Right ventricle myocardium inferior (tissue), 1 donor: ENCODE measurements at regions of chr10 and their contacts with region 1.

Region 1: GRCh38 chr10:80924063-80924952 is 386.6 kb downstream of the SH2D4B start:
- DNase-seq: no peak
- ATAC-seq: no peak

Region 2: GRCh38 chr10:80382989-80383388 is 541.3 kb before region 1 on chr10:
- intact Hi-C with region 1: loop called (anchors 5 kb)
- DNase-seq: no peak
- ATAC-seq: no peak

Region 3: DNA sequence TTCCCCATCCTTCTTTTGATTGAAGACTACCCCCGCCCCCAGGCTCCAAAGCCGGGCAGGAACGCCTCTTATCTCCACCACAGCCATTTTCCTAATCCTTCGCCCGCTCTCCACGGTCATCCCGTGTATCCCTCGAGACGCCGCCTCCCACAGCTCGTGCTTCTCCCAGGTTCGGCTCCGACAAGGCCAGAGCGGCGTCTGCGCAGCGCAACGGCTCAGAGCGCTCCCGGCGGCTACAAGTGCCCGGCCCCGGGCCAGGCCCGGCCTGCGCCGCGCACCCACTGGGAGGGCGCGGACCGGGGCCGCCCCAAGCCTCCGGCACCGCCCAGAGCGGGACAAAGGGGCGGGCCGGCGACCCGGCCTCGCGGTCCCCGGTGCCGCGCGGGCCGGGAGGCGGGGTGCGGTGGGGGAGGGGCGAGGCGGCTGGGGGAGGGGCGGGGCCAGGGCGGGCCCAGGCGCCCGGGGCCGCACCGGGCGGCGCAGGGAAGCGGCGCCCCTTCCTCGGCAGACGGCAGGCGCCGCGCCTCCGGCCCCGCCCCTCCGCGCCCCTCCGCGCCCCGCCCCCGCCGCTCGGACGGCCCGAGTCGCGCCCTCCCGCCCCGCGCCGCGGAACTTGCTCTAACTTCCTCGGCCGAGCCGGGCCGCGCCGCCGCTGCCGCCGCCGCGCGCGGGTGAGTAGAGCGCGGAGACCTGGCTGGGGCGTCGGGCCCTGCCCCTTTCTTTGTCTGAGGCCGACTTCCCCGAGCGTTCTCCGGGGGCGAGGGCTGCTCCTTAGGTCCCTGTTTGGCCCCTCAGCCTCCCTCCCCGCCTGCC is 470.4 kb before region 1 on chr10 and contains the start of gene TSPAN14:
- intact Hi-C with region 1: loop called (anchors 5 kb)
- DNase-seq: peak; percentile 95
- ATAC-seq: peak; percentile 94
- total RNA-seq, gene TSPAN14: 38.7 TPM

Region 4: GRCh38 chr10:80599424-80599847 is 324.9 kb before region 1 on chr10:
- intact Hi-C with region 1: loop called (anchors 10 kb)
- DNase-seq: peak; percentile 81
- ATAC-seq: peak; percentile 64

Region 5: GRCh38 chr10:80662577-80663261 is 261.6 kb before region 1 on chr10:
- intact Hi-C with region 1: loop called (anchors 2 kb)
- DNase-seq: peak; percentile 92
- ATAC-seq: peak; percentile 86

Region 6: DNA sequence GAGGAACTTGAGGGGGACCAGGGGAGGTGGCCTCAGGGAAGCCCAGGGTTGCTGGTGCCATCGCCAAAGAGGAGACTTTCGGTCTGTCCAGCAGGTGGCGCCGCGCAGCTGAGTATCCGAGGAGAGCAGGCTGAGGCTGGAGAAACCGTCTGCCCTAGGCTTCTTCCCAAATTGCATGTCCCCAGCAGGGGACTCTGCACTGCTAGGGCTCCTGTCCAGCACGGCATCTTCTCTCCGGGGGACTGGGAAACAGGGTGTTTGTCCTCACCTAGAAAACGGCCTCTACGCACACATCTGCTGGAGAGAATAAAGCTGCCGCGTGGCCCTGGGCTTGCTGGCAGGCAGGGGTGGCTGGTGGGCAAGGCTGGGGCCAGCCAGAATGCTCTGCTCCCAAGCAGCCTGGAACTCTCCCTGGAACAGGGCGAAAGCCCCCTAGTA is 224.7 kb before region 1 on chr10:
- intact Hi-C with region 1: loop called (anchors 1 kb)
- DNase-seq: peak; percentile 92
- ATAC-seq: peak; percentile 83